ENCODE measurements at regions of chr14 and their contacts with region 1.

Region 1: DNA sequence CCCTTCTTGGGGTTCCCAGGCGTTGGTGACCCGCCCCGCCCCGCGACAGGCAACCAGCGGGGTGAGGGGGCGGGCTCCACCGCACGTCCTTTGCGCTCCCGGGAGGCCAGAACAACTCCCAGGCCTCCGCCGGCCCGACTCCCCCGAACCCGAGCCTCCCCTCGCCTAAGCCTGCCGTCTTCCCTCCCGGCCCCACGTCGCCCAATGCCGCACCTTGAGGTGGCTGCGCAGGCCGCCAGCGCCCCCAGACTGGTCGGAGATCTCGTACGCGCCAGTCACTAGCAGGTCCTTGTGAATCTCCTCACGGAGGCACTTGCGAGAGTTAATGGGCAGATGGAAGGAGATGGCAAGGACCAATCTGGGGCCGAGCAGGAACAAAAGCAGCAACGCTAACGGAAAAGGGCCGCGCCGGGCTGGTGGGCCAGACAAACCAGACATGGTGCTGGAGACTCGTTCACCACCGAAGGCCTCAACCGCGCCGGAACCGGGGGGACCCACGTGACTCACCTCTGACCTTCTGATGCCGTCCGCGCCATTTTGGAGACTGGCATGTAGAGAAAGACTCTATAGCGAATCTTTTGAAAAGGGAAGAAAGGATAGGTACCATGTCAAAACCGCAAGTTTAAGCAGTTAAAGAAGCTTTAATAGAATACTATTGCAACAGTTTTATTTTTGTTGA is at the start of gene TMED10:
- DNase-seq: peak; percentile 95 to 96 (median 95)
- H3K4me3 ChIP-seq: peak within 1 kb of the TSS; percentile 78 to 84
- H3K4me3 Mint-ChIP-seq: peak within 1 kb of the TSS; percentile 83 to 97 (median 94)
- H3K27ac ChIP-seq: peak within 1 kb of the TSS; percentile 99
- H3K27ac Mint-ChIP-seq: peak within 1 kb of the TSS; percentile 98 to 99 (median 98)
- H3K4me1 ChIP-seq: peaks cover 38% of the 10 kb centered on the region
- H3K4me1 Mint-ChIP-seq: peaks cover 28 to 57% (median 44%) of the 10 kb centered on the region in 4 donors
- H3K27me3 ChIP-seq: no peaks in the 10 kb centered on the region
- H3K27me3 Mint-ChIP-seq: no peaks in the 10 kb centered on the region
- total RNA-seq, gene TMED10: 202 to 217 TPM

Region 2: GRCh38 chr14:75002392-75003249 is 173.7 kb before region 1 on chr14 and contains the start of gene EIF2B2:
- CTCF ChIA-PET with region 1: no interaction called
- POLR2A ChIA-PET with region 1: interaction called, 5 read pairs
- intact Hi-C with region 1: loop called (anchors 1 kb)
- DNase-seq: peak; percentile 99
- H3K4me3 ChIP-seq: peak within 1 kb of the TSS; percentile 70 to 89
- H3K4me3 Mint-ChIP-seq: peak within 1 kb of the TSS; percentile 93 to 98 (median 97)
- H3K27ac ChIP-seq: peak within 1 kb of the TSS; percentile 80
- H3K27ac Mint-ChIP-seq: peak within 1 kb of the TSS; percentile 94 to 100 (median 99)
- H3K4me1 ChIP-seq: peaks cover 25% of the 10 kb centered on the region
- H3K4me1 Mint-ChIP-seq: peaks cover 30 to 48% (median 38%) of the 10 kb centered on the region in 4 donors
- H3K27me3 ChIP-seq: no peaks in the 10 kb centered on the region
- H3K27me3 Mint-ChIP-seq: no peaks in the 10 kb centered on the region
- total RNA-seq, gene EIF2B2: 31.3 to 31.7 TPM

Region 3: DNA sequence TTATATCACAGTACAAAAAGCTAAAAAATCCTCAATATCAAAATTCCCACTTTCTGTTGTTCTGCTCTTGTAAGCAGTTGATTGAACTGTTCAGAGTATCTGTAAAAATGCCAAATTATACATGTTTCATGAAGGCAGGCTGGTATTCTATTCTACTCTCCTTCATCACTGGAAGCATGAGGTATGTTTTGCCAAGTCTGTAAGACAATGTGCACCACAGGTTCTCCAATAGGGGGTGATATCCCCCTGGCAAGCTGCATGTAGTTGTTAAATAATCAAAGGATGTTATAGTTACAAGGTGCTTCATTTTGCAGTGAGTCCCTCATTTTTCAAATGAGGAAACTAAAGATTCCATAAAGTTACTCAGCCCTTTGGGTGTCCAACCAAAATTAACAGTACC is 34.3 kb before region 1 on chr14:
- CTCF ChIA-PET with region 1: interaction called, 5 read pairs
- POLR2A ChIA-PET with region 1: interaction called, 9 read pairs
- intact Hi-C with region 1: loop called (anchors 5 kb)
- DNase-seq: peak; percentile 37 to 63 (median 51)
- H3K4me3 ChIP-seq: no peak overlapping the region
- H3K4me3 Mint-ChIP-seq: peak overlapping the region in 3 of 8 donors; percentile 1 to 16 (median 7)
- H3K27ac ChIP-seq: no peak overlapping the region
- H3K27ac Mint-ChIP-seq: peak overlapping the region; percentile 56 to 93 (median 80)
- H3K4me1 ChIP-seq: peaks cover 72% of the 10 kb centered on the region
- H3K4me1 Mint-ChIP-seq: peaks cover 50 to 78% (median 63%) of the 10 kb centered on the region in 4 donors
- H3K27me3 ChIP-seq: no peaks in the 10 kb centered on the region
- H3K27me3 Mint-ChIP-seq: no peaks in the 10 kb centered on the region

Region 4: DNA sequence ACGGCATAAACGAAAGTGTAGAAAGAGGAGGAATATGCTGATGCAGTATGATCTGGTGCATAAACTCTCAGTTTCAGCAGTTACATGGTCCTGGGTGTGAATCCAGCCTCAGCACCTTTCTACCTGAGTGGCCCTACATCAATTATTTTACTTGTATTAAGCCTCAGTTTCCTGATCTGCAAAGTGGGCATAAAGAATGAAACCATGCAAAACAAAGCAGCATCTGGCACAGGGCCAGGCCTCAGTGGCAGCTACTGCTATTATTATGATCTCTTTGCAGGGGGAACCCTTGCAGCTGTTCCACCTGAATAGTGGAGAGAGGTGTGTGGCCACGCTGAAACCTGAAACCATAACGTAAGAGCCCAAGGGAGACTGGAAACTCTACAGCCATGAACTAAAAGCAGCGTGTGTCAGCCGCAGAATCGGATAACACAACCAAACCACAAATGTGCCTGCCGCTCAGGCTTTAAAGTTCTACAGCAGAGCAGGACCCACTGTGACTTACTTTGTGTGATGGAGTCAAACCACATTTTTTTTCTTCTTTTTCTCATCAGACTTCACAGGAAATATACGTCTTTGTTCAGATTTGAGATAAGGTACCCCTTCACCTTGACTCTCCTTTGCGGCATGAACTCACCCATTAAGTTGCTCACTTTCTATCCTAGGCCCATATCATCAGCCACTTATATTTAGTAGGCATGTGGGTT is 73.1 kb after region 1 on chr14:
- CTCF ChIA-PET with region 1: no interaction called
- POLR2A ChIA-PET with region 1: interaction called, 7 read pairs
- intact Hi-C with region 1: loop called (anchors 1 kb)
- DNase-seq: peak; percentile 90 to 96 (median 95)
- H3K4me3 ChIP-seq: peak overlapping the region in 1 of 2 donors; percentile 54
- H3K4me3 Mint-ChIP-seq: peak overlapping the region; percentile 63 to 85 (median 78)
- H3K27ac ChIP-seq: peak overlapping the region; percentile 80
- H3K27ac Mint-ChIP-seq: peak overlapping the region; percentile 92 to 99 (median 97)
- H3K4me1 ChIP-seq: peaks cover 58% of the 10 kb centered on the region
- H3K4me1 Mint-ChIP-seq: peaks cover 38 to 70% (median 56%) of the 10 kb centered on the region in 4 donors
- H3K27me3 ChIP-seq: no peaks in the 10 kb centered on the region
- H3K27me3 Mint-ChIP-seq: no peaks in the 10 kb centered on the region

Region 5: GRCh38 chr14:75278422-75279161 is 102.3 kb after region 1 on chr14 and contains the start of gene FOS:
- CTCF ChIA-PET with region 1: no interaction called
- POLR2A ChIA-PET with region 1: interaction called, 8 read pairs
- intact Hi-C with region 1: loop called (anchors 1 kb)
- DNase-seq: peak; percentile 97 to 99 (median 98)
- H3K4me3 ChIP-seq: peak within 1 kb of the TSS; percentile 89 to 95
- H3K4me3 Mint-ChIP-seq: peak within 1 kb of the TSS; percentile 90 to 98 (median 94)
- H3K27ac ChIP-seq: peak within 1 kb of the TSS; percentile 75
- H3K27ac Mint-ChIP-seq: peak within 1 kb of the TSS; percentile 98 to 100 (median 99)
- H3K4me1 ChIP-seq: peaks cover 56% of the 10 kb centered on the region
- H3K4me1 Mint-ChIP-seq: peaks cover 41 to 88% (median 53%) of the 10 kb centered on the region in 4 donors
- H3K27me3 ChIP-seq: peaks cover 6% of the 10 kb centered on the region
- H3K27me3 Mint-ChIP-seq: peaks cover 0 to 24% of the 10 kb centered on the region in 2 donors
- total RNA-seq, gene FOS: 4.1 to 4.3 TPM

Region 6: DNA sequence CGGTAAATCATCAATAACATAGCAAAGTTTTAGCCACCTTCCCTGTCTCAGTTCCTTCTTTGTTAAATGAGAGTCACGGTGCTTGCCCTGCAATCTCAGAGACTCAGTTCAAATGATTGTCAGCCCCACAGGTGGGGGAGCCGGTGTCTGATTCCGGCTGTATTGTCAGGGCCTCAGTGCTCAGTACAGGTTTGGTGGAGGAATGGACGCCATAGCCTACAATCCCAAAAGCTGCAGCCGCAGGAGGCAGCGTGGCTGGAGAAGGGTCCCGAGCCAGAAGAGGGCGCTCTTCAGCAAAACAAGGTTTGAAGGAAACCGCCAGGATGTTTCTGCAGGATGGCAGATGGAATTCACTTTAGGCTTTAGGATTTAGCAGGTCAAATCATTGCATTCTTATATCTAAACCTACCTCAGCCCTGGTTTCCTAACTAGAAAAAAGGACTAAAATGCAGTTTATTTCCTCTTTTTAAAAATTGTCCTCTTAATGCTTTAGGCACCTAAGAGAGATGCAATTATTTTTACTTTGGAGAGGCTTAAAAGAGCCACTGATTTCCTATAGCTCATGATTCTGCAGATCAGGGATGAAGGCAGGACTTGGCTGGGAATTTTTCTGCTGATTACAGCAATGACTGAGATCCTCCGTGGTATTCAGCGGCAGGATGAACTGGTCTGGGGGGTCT is 131.6 kb after region 1 on chr14:
- CTCF ChIA-PET with region 1: no interaction called
- POLR2A ChIA-PET with region 1: no interaction called
- intact Hi-C with region 1: no loop called
- DNase-seq: peak; percentile 56 to 68 (median 63)
- H3K4me3 ChIP-seq: no peak overlapping the region
- H3K4me3 Mint-ChIP-seq: peak overlapping the region in 1 of 8 donors; percentile 26
- H3K27ac ChIP-seq: no peak overlapping the region
- H3K27ac Mint-ChIP-seq: no peak overlapping the region
- H3K4me1 ChIP-seq: peaks cover 6% of the 10 kb centered on the region
- H3K4me1 Mint-ChIP-seq: peaks cover 4 to 19% (median 8%) of the 10 kb centered on the region in 4 donors
- H3K27me3 ChIP-seq: no peaks in the 10 kb centered on the region
- H3K27me3 Mint-ChIP-seq: peaks cover 1 to 3% of the 10 kb centered on the region in 2 donors

Region 7: DNA sequence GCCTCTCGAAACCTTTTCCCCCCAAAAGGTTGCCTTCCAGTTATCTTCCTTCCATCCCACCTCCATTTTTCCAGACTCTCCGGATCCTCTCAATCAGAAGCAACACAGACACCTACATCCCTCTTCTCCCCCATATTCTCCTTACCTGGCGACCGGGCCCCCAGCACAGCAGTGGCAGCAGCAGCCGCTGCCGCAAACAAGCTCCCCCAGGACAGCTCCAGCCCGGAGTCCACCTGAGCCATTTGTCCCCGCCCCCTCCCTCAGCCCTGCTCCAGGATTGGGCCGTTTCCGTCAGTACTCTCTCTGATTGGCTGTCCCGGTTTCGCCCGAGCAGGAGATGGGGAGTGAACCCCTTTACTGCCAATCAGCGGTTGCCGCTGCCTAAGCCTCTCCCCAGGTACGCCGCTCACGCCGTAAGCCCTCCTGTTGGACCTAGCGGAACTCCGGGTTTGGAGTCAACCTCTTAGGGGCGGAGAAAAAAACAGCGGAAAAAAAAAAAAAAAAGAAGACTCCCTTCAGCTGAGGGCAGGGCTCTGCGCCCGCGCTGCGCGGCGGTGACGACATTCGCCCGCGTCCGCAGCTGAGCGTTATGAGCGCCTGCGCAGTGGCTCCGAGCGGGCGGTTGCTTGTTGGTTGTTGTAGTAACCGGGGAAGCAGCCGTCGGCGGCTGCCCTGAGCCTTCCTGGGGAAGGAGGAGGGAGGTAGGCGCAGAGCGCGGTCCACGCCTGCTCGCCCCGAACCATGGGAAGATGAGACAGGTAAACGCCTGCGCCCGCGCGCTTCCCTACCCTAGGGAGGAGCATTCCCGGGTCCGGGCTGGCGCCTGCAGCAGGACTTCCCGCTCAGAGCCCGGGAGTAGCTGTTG is 484.6 kb after region 1 on chr14 and contains the starts of genes ERG28 and TTLL5:
- CTCF ChIA-PET with region 1: interaction called, 3 read pairs
- POLR2A ChIA-PET with region 1: no interaction called
- intact Hi-C with region 1: loop called (anchors 1 kb)
- DNase-seq: peak; percentile 97 to 99 (median 98)
- H3K4me3 ChIP-seq: peak within 1 kb of the TSS; percentile 92 to 95
- H3K4me3 Mint-ChIP-seq: peak within 1 kb of the TSS; percentile 93 to 99 (median 96)
- H3K27ac ChIP-seq: peak within 1 kb of the TSS; percentile 88
- H3K27ac Mint-ChIP-seq: peak within 1 kb of the TSS; percentile 96 to 99 (median 98)
- H3K4me1 ChIP-seq: peaks cover 20% of the 10 kb centered on the region
- H3K4me1 Mint-ChIP-seq: peaks cover 12 to 44% (median 28%) of the 10 kb centered on the region in 4 donors
- H3K27me3 ChIP-seq: no peaks in the 10 kb centered on the region
- H3K27me3 Mint-ChIP-seq: no peaks in the 10 kb centered on the region
- total RNA-seq, gene ERG28: 12.9 to 13.9 TPM
- total RNA-seq, gene TTLL5: 25.3 to 28.2 TPM